ENCODE measurements at regions of chr2 and their contacts with region 1.

Region 1: DNA sequence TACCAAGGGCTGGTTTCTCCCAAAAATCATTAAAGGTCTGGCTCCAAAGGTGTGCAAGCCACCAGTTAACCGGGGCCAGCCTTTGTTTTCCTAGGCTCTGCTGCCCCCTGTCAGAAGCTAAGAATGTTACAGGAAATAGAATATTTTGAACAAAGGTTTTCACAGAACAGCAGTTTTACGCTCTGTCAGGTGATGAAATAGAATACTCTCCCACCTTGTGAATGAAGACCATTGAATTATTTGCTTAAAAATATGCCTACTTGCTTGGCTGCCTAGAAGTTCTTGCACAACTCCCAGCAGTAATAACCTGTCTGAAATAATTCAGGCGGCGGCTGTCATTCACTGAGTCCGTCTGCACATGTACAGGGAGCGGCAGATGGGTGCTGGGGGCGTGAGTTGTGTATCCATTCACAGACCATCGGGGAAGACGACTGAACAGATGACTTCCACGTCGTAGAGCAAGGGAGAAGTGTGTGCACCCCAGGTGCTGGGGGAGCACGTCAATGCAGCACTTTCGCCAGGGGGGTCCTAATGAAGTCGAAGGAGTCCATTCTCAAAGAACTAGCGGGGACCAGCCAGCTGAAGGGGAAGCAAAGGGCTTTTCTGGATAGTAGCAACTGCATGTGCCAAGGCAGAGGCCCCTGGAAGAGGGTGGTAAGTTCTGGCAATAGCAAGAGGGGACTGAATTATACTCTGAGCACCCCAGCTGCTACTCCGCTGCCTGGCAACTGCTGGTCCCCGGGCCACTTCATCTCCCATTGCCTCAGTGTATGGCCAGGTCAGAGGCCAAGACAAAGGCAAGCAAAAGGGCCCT is 56.1 kb downstream of the SF3B1 start:
- DNase-seq: peak; percentile 36
- H3K4me3 ChIP-seq: no peak overlapping the region
- H3K27ac ChIP-seq: no peak overlapping the region
- H3K4me1 ChIP-seq: no peaks in the 10 kb centered on the region
- H3K27me3 ChIP-seq: peaks cover 0 to 3% of the 10 kb centered on the region in 2 experiments
- CTCF ChIP-seq: peak; percentile 57 to 64
- POLR2A ChIP-seq: no peak

Region 2: GRCh38 chr2:196798980-196799379 is 579.7 kb before region 1 on chr2:
- CTCF ChIA-PET with region 1: interaction called, 4 read pairs
- POLR2A ChIA-PET with region 1: no interaction called
- dilution Hi-C with region 1: no loop called
- intact Hi-C with region 1: loop called (anchors 5 kb)
- DNase-seq: no peak
- H3K4me3 ChIP-seq: peak overlapping the region; percentile 77 to 100 (median 98)
- H3K27ac ChIP-seq: peak overlapping the region; percentile 88
- H3K4me1 ChIP-seq: peaks cover 8% of the 10 kb centered on the region
- H3K27me3 ChIP-seq: no peaks in the 10 kb centered on the region
- CTCF ChIP-seq: no peak
- POLR2A ChIP-seq: no peak

Region 3: DNA sequence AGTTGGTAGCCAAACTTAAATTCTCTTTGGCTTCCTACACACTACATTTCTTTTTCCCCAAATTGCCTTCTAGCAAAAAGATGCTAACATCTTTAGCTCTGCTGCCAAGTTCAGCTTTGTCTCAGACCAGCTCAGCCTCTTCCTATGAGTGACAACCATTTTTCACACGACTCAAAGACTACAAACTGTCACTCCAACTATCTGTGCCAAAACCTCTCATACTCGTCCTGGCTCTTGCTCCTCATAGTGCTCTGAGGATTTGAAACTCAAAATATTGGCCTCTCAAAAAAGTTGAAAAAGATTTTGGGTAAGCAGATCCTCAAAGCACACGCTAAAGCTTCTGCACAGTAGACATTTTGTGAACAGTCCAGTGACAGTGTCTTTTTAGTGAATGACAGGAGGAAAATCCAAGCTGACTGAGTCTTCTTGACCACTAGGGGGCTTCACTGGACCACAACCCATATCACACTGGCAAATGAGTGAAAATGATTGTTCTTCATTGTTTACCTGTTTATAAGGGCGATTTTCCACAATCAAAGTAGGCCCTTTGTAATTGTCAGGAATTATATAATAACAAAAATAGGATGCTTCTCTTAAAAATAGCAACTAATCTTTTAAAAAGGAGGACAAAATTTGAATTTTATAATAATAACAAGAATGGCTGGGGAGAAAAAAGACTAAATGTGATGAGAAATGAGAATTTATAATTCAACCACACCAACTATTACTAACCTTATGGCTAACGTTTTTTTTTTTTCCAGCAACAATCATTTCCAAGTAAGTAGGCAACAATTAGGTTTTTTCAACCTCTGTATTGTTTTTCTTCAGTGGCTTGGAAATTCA is 366.7 kb before region 1 on chr2:
- CTCF ChIA-PET with region 1: interaction called, 21 read pairs
- POLR2A ChIA-PET with region 1: no interaction called
- dilution Hi-C with region 1: no loop called
- intact Hi-C with region 1: loop called (anchors 1 kb)
- DNase-seq: peak; percentile 60
- H3K4me3 ChIP-seq: no peak overlapping the region
- H3K27ac ChIP-seq: no peak overlapping the region
- H3K4me1 ChIP-seq: no peaks in the 10 kb centered on the region
- H3K27me3 ChIP-seq: no peaks in the 10 kb centered on the region
- CTCF ChIP-seq: peak; percentile 75 to 78
- POLR2A ChIP-seq: no peak

Region 4: DNA sequence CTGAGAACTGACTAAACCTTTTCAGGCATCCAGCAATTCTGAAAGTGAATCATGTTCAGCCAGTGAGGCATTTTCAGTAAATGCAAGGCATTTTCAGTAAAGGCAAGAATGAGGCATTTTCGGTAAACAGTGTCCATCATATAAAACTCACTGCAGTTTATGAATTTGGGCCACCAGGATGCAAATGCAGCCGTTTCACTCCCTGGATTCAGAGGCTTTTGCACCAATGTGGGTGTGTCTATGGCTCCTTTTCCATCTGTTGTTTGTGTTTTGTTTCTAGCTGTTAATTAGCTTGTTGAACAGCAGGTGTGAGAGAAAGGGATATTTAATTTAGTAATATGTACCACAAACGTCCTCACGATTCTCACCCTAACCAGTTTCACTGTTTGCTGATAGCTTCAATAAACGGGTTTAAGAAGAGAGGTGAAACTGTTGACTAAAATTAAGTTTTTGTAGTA is 335.9 kb before region 1 on chr2:
- CTCF ChIA-PET with region 1: no interaction called
- POLR2A ChIA-PET with region 1: no interaction called
- dilution Hi-C with region 1: no loop called
- intact Hi-C with region 1: no loop called
- DNase-seq: no peak
- H3K4me3 ChIP-seq: no peak overlapping the region
- H3K27ac ChIP-seq: no peak overlapping the region
- H3K4me1 ChIP-seq: no peaks in the 10 kb centered on the region
- H3K27me3 ChIP-seq: no peaks in the 10 kb centered on the region
- CTCF ChIP-seq: no peak
- POLR2A ChIP-seq: no peak

Region 5: DNA sequence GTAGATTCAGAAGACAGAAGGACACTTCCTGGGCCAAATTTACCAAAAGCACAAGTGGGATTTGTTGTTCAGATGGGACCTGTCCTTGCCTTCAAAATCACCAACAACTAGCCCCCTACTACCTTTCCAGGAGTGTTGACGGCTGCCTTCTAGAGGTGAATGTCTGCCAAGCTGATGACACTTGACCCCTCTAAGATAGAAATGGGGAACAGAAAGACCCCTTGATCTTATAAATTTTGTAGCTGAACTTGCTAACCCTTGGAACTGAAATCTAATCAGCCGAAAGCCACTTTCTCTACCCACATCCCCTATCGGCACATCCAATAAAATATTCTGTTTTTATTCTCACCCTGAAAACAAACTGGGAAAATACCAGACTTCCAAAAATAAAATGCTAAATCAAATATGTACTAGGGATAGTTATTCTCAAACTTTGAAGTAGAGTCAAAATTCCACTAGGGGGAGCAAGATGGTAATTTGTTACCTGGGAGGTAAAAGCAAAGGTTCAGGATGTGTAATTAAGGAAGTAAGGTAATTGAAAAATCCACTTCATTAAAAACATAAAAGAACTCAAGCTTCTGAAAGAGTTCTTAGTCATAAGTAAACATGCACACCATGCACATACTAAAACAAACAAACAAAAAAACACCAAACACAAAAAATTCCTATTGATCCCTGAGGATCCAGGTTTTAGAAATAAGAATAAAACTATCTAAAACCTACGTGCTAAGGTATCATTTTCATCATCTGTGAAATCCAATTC is 187.3 kb before region 1 on chr2:
- CTCF ChIA-PET with region 1: interaction called, 11 read pairs
- POLR2A ChIA-PET with region 1: no interaction called
- dilution Hi-C with region 1: no loop called
- intact Hi-C with region 1: loop called (anchors 1 kb)
- DNase-seq: peak; percentile 55
- H3K4me3 ChIP-seq: no peak overlapping the region
- H3K27ac ChIP-seq: no peak overlapping the region
- H3K4me1 ChIP-seq: peaks cover 8% of the 10 kb centered on the region
- H3K27me3 ChIP-seq: peaks cover 0 to 5% of the 10 kb centered on the region in 2 experiments
- CTCF ChIP-seq: peak; percentile 36 to 37
- POLR2A ChIP-seq: no peak

Region 6: GRCh38 chr2:197324801-197325200 is 53.9 kb before region 1 on chr2:
- CTCF ChIA-PET with region 1: no interaction called
- POLR2A ChIA-PET with region 1: no interaction called
- dilution Hi-C with region 1: no loop called
- intact Hi-C with region 1: loop called (anchors 5 kb)
- DNase-seq: no peak
- H3K4me3 ChIP-seq: no peak overlapping the region
- H3K27ac ChIP-seq: no peak overlapping the region
- H3K4me1 ChIP-seq: no peaks in the 10 kb centered on the region
- H3K27me3 ChIP-seq: peaks cover 14 to 25% of the 10 kb centered on the region in 2 experiments
- CTCF ChIP-seq: no peak
- POLR2A ChIP-seq: no peak